Activated CD4-positive, alpha-beta memory T cell treated with anti-CD3 and anti-CD28 coated beads for 36 hours (primary cell): ENCODE measurements at regions of chr9 and their contacts with region 1.

Region 1: DNA sequence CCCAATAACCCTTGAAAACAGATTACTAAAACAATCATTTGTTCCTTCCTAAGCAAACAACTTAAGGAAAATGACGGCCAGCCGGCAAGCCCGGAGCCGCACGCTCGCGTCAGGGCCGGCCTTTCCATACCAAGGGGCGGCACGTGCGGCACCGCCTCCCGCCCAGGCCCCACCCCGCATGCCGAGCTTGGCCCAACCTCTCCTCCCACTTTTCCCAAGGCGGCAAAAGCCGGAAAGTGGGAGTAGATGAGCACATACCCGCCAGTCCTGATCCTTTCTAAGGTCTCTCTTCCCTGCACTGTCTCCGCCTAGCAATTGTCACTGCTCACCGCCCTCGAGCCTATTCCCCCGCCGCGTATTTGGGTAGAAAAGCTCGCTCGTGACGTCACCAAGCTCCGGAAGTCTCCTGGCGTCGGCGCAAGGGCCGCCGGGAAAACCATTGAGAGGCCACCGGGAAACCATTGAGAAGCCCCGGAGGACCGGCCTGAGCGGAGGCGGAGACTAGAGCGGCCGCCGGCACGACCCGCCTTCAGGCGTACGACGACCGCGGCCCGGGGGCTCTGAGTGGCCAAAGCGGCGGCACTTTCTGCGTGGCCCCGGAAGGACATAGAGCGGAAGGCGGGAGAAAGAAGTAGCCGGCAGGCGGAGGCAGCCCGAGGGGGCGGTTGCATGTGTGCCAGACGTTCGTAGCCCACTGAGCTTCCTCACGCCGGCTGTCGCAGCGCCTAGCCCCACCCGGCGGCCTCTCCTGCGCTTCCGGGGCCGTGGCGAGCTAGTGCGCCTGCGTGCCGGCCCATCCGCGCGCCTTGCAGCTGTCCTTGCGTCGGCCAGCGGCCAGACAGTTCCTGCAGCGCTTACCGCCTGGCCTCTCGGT is at the starts of genes NCBP1 and TSTD2:
- DNase-seq: peak; percentile 98
- H3K4me3 Mint-ChIP-seq: peak within 1 kb of the TSS; percentile 86
- H3K27ac Mint-ChIP-seq: peak within 1 kb of the TSS; percentile 97
- H3K4me1 Mint-ChIP-seq: peaks cover 50% of the 10 kb centered on the region
- H3K27me3 Mint-ChIP-seq: no peaks in the 10 kb centered on the region
- total RNA-seq, gene NCBP1: 43.4 to 47.2 TPM
- total RNA-seq, gene TSTD2: 10.3 to 13.4 TPM

Region 2: DNA sequence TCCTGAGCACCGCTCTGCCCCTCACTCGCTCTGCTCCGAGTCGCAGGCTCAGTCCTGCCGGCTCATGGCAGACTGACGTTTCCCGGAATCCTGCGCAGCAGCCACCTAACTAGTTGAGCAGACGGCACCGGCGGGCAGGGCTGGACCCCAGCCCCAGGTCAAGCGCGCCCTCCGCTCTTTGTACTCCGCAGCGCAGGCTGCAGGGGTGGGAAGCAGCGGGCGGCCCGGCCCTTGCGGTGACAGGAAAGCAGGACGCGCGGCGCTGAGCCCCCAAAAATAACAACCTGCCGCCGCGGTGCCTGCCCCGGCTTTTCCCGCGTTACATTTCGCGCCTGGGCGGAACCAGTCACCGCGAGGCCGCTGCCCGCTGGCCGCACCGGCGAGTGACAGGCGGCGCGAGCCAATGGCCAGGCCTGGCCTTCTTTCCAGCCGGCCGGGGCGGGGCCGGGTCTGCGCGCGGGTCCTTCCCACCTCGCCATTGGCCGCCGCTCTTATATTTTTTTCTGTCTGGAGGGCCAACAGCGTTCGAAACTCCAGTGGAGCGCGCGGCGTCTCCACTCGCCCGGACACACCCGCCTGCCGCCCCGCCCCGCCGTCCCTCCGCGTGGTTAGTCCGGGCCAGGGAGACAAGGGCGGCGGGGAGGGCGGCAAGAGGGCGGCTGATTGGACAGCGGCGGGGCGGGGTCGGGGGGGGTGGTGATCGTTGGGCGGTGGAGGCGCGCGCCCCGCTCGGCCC is 1215.0 kb before region 1 on chr9 and contains the start of gene ZNF367:
- CTCF ChIA-PET with region 1: no interaction called
- POLR2A ChIA-PET with region 1: no interaction called
- intact Hi-C with region 1: loop called (anchors 10 kb)
- DNase-seq: peak; percentile 96
- H3K4me3 Mint-ChIP-seq: peak within 1 kb of the TSS; percentile 90
- H3K27ac Mint-ChIP-seq: peak within 1 kb of the TSS; percentile 93
- H3K4me1 Mint-ChIP-seq: peaks cover 37% of the 10 kb centered on the region
- H3K27me3 Mint-ChIP-seq: no peaks in the 10 kb centered on the region
- total RNA-seq, gene ZNF367: 29.0 to 30.1 TPM

Region 3: DNA sequence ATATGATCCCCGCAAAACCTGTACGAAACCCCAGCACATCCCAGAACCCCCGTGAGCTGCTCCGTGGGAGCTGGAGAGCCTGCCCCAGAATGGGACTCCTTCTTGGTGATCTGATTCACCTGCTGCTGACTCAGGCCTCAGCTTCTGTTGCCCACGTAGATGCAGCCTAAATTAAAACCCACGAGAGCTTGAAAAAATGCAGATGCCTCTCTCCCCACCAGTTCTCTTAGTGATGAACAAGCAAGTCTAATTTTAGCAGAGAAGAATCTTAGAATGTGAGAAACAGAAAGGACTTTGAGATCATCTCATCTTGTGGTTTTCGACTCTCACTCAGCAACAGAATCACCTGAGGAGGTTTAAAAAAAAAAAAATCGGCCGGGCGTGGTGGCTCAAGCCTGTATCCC is 74.1 kb before region 1 on chr9:
- CTCF ChIA-PET with region 1: no interaction called
- POLR2A ChIA-PET with region 1: no interaction called
- intact Hi-C with region 1: loop called (anchors 2 kb)
- DNase-seq: peak; percentile 48
- H3K4me3 Mint-ChIP-seq: peak overlapping the region; percentile 38
- H3K27ac Mint-ChIP-seq: peak overlapping the region; percentile 82
- H3K4me1 Mint-ChIP-seq: peaks cover 12% of the 10 kb centered on the region
- H3K27me3 Mint-ChIP-seq: peaks cover 10% of the 10 kb centered on the region

Region 4: GRCh38 chr9:97645720-97646119 is 12.5 kb after region 1 on chr9:
- CTCF ChIA-PET with region 1: interaction called, 5 read pairs
- POLR2A ChIA-PET with region 1: interaction called, 10 read pairs
- intact Hi-C with region 1: no loop called
- DNase-seq: no peak
- H3K4me3 Mint-ChIP-seq: no peak overlapping the region
- H3K27ac Mint-ChIP-seq: no peak overlapping the region
- H3K4me1 Mint-ChIP-seq: peaks cover under 1% of the 10 kb centered on the region
- H3K27me3 Mint-ChIP-seq: no peaks in the 10 kb centered on the region

Region 5: GRCh38 chr9:97900738-97901565 is 267.7 kb after region 1 on chr9:
- CTCF ChIA-PET with region 1: interaction called, 4 read pairs
- POLR2A ChIA-PET with region 1: no interaction called
- intact Hi-C with region 1: loop called (anchors 5 kb)
- DNase-seq: no peak
- H3K4me3 Mint-ChIP-seq: no peak overlapping the region
- H3K27ac Mint-ChIP-seq: no peak overlapping the region
- H3K4me1 Mint-ChIP-seq: peaks cover 55% of the 10 kb centered on the region
- H3K27me3 Mint-ChIP-seq: no peaks in the 10 kb centered on the region

Region 6: DNA sequence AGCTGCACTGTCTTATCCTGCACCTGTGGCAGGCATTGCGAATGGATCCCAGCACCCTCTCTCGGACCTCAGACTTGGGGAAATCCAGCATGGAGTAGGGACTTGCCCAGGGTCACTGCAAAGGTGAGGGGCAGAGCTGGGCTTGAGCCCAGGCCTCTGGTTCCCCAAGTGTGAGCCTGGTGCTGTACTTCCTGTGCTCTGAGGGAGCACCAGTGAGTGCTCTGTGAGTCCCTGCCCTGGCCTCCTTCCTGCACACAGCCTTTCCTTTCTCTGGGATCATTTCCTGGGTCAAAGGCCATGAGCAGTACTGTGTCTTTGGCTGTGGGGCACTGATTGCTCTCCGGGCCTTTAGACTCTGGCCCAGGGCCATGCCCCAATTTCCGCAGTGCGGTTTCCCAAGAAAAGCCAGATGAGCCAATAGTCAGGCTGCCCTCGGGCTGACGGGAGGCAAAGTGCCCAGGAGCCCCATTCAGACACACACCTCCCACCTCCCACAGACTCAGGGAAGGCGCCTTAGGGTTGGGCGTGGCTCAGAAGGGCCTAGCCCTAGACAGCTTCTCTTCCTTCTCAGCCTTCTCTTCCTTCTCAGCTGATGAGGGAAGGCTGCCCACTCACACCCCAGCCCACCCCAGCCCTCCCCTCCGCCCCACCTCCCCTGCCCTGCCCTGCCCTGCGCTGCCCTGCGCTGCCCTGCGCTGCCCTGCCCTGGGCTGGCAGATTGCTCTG is 509.1 kb after region 1 on chr9:
- CTCF ChIA-PET with region 1: no interaction called
- POLR2A ChIA-PET with region 1: no interaction called
- intact Hi-C with region 1: no loop called
- DNase-seq: no peak
- H3K4me3 Mint-ChIP-seq: no peak overlapping the region
- H3K27ac Mint-ChIP-seq: no peak overlapping the region
- H3K4me1 Mint-ChIP-seq: peaks cover 1% of the 10 kb centered on the region
- H3K27me3 Mint-ChIP-seq: no peaks in the 10 kb centered on the region